Motor neuron (in vitro differentiated cells): ENCODE measurements at regions of chr9 and their contacts with region 1.

Region 1: DNA sequence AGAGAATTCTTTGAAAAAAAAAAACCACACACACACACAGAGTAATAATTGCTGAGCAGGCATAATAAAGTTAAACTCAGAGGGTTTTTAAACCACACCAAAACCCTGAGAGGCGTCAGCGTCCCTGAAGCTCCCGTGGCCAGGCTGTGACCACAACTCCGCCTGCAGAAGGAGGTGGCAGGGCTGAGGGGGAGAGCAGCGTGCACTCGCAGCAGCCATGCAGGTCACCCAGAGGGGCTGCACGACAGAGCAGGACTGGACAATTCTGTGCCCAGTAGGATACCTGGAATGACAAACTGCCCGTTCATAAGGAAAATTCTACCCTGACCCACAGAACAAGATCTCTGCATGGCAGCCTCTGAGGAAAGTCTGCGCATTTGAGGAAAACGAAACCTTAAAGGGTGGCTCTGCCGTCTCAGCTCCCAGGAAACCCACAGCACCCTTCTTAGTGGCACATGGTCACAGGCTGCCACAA is 44.0 kb downstream of the ROR2 start:
- ATAC-seq: peak in 7 of 8 experiments; percentile 6 to 63 (median 53)
- H3K4me3 ChIP-seq: no peak overlapping the region
- H3K27ac ChIP-seq: no peak overlapping the region
- H3K4me1 ChIP-seq: peaks cover 10 to 11% of the 10 kb centered on the region in 2 donors

Region 2: DNA sequence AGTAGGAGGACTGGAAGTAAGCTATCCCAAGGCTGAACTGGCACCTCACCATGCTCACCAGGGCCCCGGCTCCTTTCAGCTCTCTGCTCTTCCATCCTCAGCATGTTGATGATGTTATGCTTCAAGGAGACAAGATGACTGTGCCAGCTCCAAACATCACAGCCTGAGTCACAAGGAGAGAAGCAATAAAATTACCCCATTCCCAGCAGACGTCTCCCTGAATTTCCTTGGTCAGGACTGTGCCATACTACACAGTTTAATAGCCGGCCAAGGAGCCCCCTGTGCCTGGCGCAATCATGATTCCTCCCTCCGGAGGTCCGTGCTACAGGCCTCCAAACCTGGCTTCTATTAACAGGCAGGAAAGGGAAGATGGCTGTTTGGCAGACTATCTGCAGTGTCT is 95.2 kb after region 1 on chr9:
- in situ Hi-C with region 1: loop called in 1 of 9 experiments (anchors 25 kb)
- ATAC-seq: no peak
- H3K4me3 ChIP-seq: no peak overlapping the region
- H3K27ac ChIP-seq: no peak overlapping the region
- H3K4me1 ChIP-seq: no peaks in the 10 kb centered on the region

Region 3: GRCh38 chr9:92097997-92098482 is 192.0 kb after region 1 on chr9:
- in situ Hi-C with region 1: no loop called
- ATAC-seq: peak in 2 of 8 experiments; percentile 46 to 58
- H3K4me3 ChIP-seq: no peak overlapping the region
- H3K27ac ChIP-seq: no peak overlapping the region
- H3K4me1 ChIP-seq: no peaks in the 10 kb centered on the region

Region 4: GRCh38 chr9:92349771-92350739 is 444.0 kb after region 1 on chr9:
- in situ Hi-C with region 1: no loop called
- ATAC-seq: peak in 2 of 8 experiments; percentile 69 to 94
- H3K4me3 ChIP-seq: no peak overlapping the region
- H3K27ac ChIP-seq: no peak overlapping the region
- H3K4me1 ChIP-seq: no peaks in the 10 kb centered on the region